MCF 10A (cell line): ENCODE measurements at regions of chr15 and their contacts with region 1.

Region 1: DNA sequence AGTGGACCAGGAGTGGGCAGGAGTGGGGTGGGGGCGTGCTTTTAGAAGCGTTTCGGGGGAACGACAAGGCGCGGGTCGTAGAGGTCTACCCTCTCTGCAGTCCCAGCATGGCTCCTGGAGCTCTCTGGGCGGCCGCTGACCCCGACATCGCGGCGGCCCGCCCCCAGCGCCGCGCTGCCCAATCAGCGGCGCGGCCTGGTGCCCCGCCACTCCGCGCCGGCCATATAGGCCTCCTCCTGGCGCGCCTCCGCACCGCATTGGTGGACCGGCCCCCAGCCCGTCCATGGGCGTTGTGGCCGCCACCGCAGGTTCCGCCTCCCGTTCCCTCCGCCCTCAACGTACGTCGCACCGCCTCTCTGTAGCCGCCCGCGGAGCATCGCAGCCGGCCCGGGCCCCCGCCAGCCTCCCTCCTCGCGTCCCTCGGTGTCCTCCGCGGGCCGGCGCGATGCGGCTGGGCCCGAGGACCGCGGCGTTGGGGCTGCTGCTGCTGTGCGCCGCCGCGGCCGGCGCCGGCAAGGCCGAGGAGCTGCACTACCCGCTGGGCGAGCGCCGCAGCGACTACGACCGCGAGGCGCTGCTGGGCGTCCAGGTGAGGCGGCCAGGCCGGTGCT is at the start of gene RCN2:
- DNase-seq: peak; percentile 94
- H3K4me3 Mint-ChIP-seq: peak within 1 kb of the TSS; percentile 78
- H3K27ac Mint-ChIP-seq: peak within 1 kb of the TSS; percentile 74
- H3K4me1 Mint-ChIP-seq: peaks cover 7% of the 10 kb centered on the region
- H3K27me3 Mint-ChIP-seq: no peaks in the 10 kb centered on the region
- CTCF ChIP-seq: no peak
- total RNA-seq, gene RCN2: 48.1 and 68.8 TPM in 2 replicates

Region 2: GRCh38 chr15:76905013-76905839 is 26.3 kb before region 1 on chr15 and contains the start of gene SCAPER:
- CTCF ChIA-PET with region 1: interaction called, 3 read pairs
- POLR2A ChIA-PET with region 1: interaction called, 11 read pairs
- intact Hi-C with region 1: no loop called
- DNase-seq: peak; percentile 82
- H3K4me3 Mint-ChIP-seq: peak within 1 kb of the TSS; percentile 83
- H3K27ac Mint-ChIP-seq: peak within 1 kb of the TSS; percentile 88
- H3K4me1 Mint-ChIP-seq: peaks cover 7% of the 10 kb centered on the region
- H3K27me3 Mint-ChIP-seq: no peaks in the 10 kb centered on the region
- CTCF ChIP-seq: no peak
- total RNA-seq, gene SCAPER: 9.5 and 13.9 TPM in 2 replicates

Region 3: GRCh38 chr15:76945494-76946093 is 14.1 kb after region 1 on chr15:
- CTCF ChIA-PET with region 1: interaction called, 3 read pairs
- POLR2A ChIA-PET with region 1: interaction called, 26 read pairs
- intact Hi-C with region 1: no loop called
- DNase-seq: no peak
- H3K4me3 Mint-ChIP-seq: no peak overlapping the region
- H3K27ac Mint-ChIP-seq: no peak overlapping the region
- H3K4me1 Mint-ChIP-seq: no peaks in the 10 kb centered on the region
- H3K27me3 Mint-ChIP-seq: no peaks in the 10 kb centered on the region
- CTCF ChIP-seq: no peak